K562 (cell line): ENCODE measurements at regions of chr12 and their contacts with region 1.

Region 1: DNA sequence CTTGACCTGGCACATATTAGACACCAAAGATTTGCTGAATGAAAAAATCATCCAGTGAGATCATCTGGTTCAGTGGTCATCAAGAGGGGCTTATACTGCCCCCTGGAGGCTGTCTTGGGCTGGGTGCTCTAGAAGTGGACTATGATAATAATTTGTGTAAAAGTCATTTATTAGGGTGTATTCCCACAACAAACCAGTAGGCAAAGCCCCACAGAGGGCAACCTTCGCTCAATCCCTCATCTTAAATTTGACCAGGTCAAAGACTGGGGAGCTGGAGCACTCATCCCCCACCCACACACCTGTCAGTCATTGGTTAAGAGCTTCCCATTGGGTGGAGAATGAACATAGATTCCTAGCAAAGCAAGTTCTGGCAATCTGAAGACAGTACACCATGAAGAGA is 20.0 kb upstream of the FICD start:
- DNase-seq: peak; percentile 76 to 79 (median 78)
- ATAC-seq: peak; percentile 94
- H3K4me3 ChIP-seq: no peak overlapping the region
- H3K27ac ChIP-seq: no peak overlapping the region
- H3K4me1 ChIP-seq: no peaks in the 10 kb centered on the region; a peak in 1 of 5 replicates
- H3K27me3 ChIP-seq: peaks cover 16 to 31% of the 10 kb centered on the region in 2 experiments
- CTCF ChIP-seq: peak; percentile 84 to 93 (median 84)
- EP300 ChIP-seq: no peak
- POLR2A ChIP-seq: no peak
- RAD21 ChIP-seq: peak; percentile 73 to 90

Region 2: DNA sequence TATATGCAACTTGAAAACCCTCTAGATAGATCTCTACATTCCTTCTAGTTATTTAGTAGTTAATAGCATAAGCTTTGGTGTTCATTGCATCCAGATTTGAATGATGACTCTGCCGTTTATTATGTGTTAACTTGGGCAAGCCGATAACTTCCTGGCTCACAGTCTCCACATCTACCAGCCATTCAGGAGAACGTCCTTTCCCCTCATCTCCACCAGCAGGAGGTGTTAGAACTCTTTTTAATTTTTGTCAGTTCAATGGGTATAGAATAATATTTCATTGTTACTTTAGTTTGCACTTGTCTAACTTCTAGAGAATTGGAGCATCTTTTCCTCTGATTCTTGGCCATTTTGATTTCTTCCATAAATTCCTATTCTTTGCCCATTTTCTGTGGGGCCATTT is 396.0 kb before region 1 on chr12:
- CTCF ChIA-PET with region 1: interaction called, 4 read pairs
- POLR2A ChIA-PET with region 1: no interaction called
- in situ Hi-C with region 1: no loop called
- intact Hi-C with region 1: loop called (anchors 10 kb)
- DNase-seq: peak in 2 of 4 experiments; percentile 27 to 58
- ATAC-seq: peak; percentile 78
- H3K4me3 ChIP-seq: no peak overlapping the region
- H3K27ac ChIP-seq: no peak overlapping the region
- H3K4me1 ChIP-seq: peaks cover 4 to 15% of the 10 kb centered on the region in 2 experiments; a peak in 4 of 5 replicates
- H3K27me3 ChIP-seq: peaks cover 3 to 6% of the 10 kb centered on the region in 2 experiments; a peak in 3 of 5 replicates
- CTCF ChIP-seq: peak; percentile 60 to 84 (median 62); a peak in 5 of 6 replicates
- EP300 ChIP-seq: no peak
- POLR2A ChIP-seq: no peak
- RAD21 ChIP-seq: peak; percentile 71 to 86

Region 3: DNA sequence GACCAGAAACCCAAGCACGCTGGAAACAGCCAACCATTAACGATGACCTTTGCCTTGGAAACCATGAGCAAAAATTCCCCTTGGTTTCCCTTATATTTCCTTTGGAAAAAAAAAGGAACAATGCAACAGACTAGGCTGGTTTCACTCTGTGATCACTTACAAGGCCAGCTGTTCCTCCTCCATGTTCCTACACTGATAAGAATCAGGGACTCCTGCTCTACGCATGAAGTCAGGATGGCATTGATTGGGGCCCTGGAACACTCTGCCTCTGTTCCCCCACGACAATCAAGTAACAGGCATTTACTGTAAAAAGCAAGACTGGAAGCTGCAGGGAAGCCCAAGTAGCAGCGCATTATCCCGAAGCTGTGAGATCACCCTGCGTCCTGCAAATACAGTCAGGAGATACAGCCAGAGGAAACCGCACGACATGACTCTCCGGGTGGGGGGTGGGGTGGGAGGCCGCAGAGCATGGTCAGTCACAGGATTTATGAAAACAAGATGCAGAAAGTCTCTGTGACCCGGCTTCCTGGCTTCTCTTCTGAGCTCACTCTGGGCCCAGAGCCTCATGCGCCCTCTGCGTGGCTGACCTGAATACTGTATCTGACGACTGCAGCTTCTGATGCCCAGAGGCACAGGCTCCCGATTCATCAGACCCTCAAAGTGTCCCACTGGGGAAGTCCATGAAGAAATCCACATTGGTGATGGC is 331.2 kb after region 1 on chr12:
- CTCF ChIA-PET with region 1: no interaction called
- POLR2A ChIA-PET with region 1: no interaction called
- in situ Hi-C with region 1: no loop called
- intact Hi-C with region 1: no loop called
- DNase-seq: peak in 3 of 4 experiments; percentile 47 to 60 (median 47)
- ATAC-seq: peak; percentile 35; the same call in 2 of the 3 replicates
- H3K4me3 ChIP-seq: no peak overlapping the region
- H3K27ac ChIP-seq: no peak overlapping the region
- H3K4me1 ChIP-seq: peaks cover 14 to 36% of the 10 kb centered on the region in 2 experiments; a peak in 4 of 5 replicates
- H3K27me3 ChIP-seq: peaks cover 2 to 6% of the 10 kb centered on the region in 2 experiments; a peak in 3 of 5 replicates
- CTCF ChIP-seq: no peak
- EP300 ChIP-seq: no peak
- POLR2A ChIP-seq: no peak
- RAD21 ChIP-seq: no peak